Activated CD8-positive, alpha-beta T cell treated with anti-CD3 and anti-CD28 coated beads for 36 hours (primary cell): ENCODE measurements at regions of chr11 and their contacts with region 1.

Region 1: DNA sequence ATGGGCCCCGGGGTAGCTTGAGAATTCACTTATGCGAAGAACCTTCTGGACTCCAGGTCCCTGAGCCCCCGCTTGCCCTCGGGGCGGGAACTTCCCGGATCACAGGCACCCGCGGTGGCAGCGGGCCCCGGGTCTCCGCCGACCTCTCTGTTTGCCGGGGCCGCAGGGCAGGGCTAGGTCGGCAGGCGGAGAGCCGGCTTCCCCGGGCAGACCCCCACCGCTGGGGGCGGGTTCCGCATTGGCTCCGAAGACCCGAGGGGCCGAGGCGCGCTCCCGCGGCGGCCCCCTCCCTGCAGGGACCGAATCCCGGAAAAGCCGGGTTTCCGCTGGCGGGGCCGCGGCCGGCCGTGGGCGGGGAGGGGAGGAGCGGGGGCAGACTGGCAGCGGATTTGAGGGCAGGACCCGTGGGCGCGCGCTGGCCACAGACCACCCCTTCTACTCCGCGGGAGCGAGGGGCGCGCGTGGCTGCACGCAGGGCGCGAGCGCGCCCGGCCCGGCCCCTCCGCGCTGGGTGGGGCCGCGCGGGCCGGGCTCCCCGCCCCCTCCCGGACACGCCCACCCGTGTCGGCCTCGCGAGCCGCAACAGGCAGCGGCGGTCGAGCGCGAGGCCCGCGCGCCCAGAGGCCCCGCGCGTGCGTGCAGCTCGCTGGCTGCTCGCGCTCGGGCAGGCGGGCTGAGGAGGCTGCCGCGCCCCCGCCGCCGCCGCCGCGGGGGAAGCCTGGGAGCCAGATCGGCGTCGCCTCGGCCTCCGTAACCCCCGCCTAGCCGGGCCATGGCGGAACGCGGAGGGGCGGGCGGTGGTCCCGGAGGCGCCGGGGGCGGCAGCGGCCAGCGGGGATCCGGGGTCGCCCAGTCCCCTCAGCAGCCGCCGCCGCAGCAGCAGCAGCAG is at the start of gene PACS1:
- DNase-seq: peak; percentile 80
- ATAC-seq: peak; percentile 63
- H3K4me3 Mint-ChIP-seq: peak within 1 kb of the TSS; percentile 81
- H3K27ac Mint-ChIP-seq: peak within 1 kb of the TSS; percentile 95
- H3K4me1 Mint-ChIP-seq: peaks cover 63% of the 10 kb centered on the region
- H3K27me3 Mint-ChIP-seq: no peaks in the 10 kb centered on the region
- CTCF ChIP-seq: no peak
- total RNA-seq, gene PACS1: 76.3 to 78.3 TPM

Region 2: DNA sequence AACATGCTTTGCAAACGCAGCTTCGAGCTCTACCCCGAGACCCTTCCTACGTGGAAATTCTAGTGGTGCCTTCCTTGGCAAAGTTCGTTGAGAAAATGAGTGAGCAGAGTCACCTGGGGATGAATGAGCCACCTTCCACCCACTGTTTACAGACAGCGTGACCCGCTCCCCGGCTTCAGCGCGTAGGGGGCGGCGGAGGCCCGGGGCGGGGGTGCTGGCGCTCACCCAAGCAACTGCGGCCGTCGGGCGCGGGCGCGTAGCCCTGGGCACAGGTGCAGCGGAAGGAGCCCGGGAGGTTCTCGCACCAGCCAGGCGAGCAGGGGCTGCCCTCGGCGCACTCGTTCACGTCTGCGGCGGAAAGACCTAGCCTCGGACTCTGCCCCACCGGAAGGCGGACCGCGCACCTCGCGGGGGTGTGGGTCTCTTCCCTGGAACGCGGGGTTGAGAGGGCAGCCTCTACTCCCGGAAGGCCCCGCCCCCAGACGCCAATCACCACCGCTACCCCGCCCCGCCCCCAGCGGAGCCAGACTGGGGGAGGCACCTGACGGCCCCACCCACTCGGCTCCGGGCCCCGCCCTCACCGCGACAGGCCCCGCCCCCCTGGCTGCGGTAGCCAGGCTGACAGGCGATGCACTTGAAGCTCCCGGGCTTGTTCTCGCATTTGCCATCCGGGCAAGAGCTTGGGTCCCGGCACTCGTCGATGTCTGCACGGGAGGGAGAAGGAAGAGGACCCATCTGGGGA is 523.6 kb before region 1 on chr11:
- CTCF ChIA-PET with region 1: no interaction called
- POLR2A ChIA-PET with region 1: no interaction called
- intact Hi-C with region 1: no loop called
- DNase-seq: peak; percentile 98
- ATAC-seq: peak; percentile 90
- H3K4me3 Mint-ChIP-seq: peak overlapping the region; percentile 71
- H3K27ac Mint-ChIP-seq: peak overlapping the region; percentile 84
- H3K4me1 Mint-ChIP-seq: peaks cover 52% of the 10 kb centered on the region
- H3K27me3 Mint-ChIP-seq: no peaks in the 10 kb centered on the region
- CTCF ChIP-seq: no peak

Region 3: DNA sequence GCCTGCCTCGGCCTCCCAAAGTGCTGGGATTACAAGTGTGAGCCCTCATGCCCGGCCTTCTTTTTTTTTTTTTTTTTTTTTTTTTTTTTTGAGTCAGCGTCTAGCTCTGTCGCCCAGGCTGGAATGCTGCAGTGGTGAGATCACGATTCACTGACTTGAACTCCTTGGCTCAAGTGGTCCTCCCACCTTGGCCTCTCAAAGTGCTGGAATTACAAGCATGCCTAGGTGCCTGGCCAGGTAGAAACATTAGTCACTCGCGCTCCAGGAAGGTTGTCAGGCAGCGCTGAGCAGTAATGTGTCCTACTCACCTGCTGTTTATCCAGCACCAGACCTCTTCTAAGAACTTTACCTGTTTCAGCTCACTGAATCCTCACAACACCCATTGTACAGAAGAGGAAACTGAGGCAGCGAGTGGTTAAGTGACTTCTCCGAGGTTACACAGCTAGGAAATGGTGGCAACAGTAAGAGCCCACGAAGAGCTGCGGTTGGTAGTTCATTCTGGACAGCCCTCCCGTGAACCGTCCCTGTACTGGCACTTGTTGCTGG is 58.6 kb before region 1 on chr11:
- CTCF ChIA-PET with region 1: no interaction called
- POLR2A ChIA-PET with region 1: no interaction called
- intact Hi-C with region 1: no loop called
- DNase-seq: no peak
- ATAC-seq: no peak
- H3K4me3 Mint-ChIP-seq: no peak overlapping the region
- H3K27ac Mint-ChIP-seq: no peak overlapping the region
- H3K4me1 Mint-ChIP-seq: peaks cover 2% of the 10 kb centered on the region
- H3K27me3 Mint-ChIP-seq: peaks cover 17% of the 10 kb centered on the region
- CTCF ChIP-seq: no peak

Region 4: GRCh38 chr11:66045177-66045639 is 24.8 kb before region 1 on chr11:
- CTCF ChIA-PET with region 1: interaction called, 133 read pairs
- POLR2A ChIA-PET with region 1: interaction called, 3 read pairs
- intact Hi-C with region 1: no loop called
- DNase-seq: peak; percentile 88
- ATAC-seq: peak; percentile 93
- H3K4me3 Mint-ChIP-seq: peak overlapping the region; percentile 38
- H3K27ac Mint-ChIP-seq: peak overlapping the region; percentile 69
- H3K4me1 Mint-ChIP-seq: peaks cover 20% of the 10 kb centered on the region
- H3K27me3 Mint-ChIP-seq: peaks cover 7% of the 10 kb centered on the region
- CTCF ChIP-seq: peak; percentile 98

Region 5: DNA sequence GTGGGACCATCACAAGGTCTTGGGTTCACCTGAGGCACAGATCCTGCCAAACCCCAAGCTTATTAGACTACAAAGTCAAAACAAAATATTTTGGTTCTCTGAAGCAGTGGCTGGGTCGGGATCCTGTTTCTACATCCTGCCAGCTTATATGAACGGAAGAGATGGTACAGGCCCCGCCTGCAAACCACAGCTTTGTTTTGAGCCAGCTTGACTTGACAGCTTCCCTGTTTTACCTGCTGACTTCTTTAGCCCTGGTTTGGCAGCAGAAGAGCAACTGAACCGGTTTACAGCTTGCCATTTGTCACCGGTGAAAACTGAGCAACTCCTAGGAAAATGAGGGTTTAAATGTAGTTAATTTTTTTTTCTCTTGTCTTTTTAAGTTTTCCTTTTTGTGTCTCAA is 11.5 kb after region 1 on chr11:
- CTCF ChIA-PET with region 1: interaction called, 59 read pairs
- POLR2A ChIA-PET with region 1: interaction called, 25 read pairs
- intact Hi-C with region 1: no loop called
- DNase-seq: peak; percentile 89
- ATAC-seq: peak; percentile 83
- H3K4me3 Mint-ChIP-seq: peak overlapping the region; percentile 75
- H3K27ac Mint-ChIP-seq: peak overlapping the region; percentile 99
- H3K4me1 Mint-ChIP-seq: peaks cover 89% of the 10 kb centered on the region
- H3K27me3 Mint-ChIP-seq: no peaks in the 10 kb centered on the region
- CTCF ChIP-seq: no peak

Region 6: DNA sequence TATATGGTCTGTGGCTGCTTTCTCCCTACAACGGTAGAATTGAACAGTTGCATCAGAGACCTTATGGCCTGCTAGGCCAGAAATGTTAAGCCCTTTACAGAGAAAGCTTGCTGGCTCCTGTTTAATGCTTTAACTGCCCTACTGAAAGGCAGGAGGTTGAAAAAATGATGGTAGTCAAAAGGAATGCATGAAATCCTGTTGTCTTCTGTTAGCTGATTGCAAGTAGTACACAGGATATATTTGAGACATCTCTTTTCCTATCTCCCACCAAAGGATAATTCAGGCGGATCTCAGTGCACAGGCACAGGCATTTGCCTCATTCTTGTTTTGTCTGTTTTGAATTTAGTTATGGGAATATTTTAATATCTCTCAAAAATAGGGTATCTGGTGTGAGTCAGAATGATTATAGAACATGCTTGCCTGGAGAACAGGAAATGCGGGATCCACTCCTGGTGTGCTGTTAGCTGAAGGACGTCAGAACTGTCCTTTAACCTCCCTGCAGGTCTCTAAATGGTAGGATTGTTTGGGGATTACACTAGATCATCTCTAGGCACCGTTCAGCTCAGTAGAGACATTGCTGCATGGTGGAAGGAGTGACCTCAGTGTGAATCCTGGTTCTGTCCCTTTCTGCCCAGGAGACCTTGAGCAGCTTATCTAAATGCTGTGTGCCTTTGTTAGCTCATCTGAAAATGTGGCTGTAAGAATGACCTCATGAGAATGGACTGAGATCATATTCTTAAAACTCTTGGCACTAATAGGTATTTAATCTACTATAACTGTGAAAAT is 49.6 kb after region 1 on chr11:
- CTCF ChIA-PET with region 1: interaction called, 19 read pairs
- POLR2A ChIA-PET with region 1: interaction called, 8 read pairs
- intact Hi-C with region 1: no loop called
- DNase-seq: no peak
- ATAC-seq: no peak
- H3K4me3 Mint-ChIP-seq: no peak overlapping the region
- H3K27ac Mint-ChIP-seq: peak overlapping the region; percentile 69
- H3K4me1 Mint-ChIP-seq: peaks cover 83% of the 10 kb centered on the region
- H3K27me3 Mint-ChIP-seq: no peaks in the 10 kb centered on the region
- CTCF ChIP-seq: no peak

Region 7: GRCh38 chr11:66136752-66137123 is 66.8 kb after region 1 on chr11:
- CTCF ChIA-PET with region 1: interaction called, 112 read pairs
- POLR2A ChIA-PET with region 1: interaction called, 4 read pairs
- intact Hi-C with region 1: no loop called
- DNase-seq: peak; percentile 58
- ATAC-seq: no peak
- H3K4me3 Mint-ChIP-seq: no peak overlapping the region
- H3K27ac Mint-ChIP-seq: peak overlapping the region; percentile 62
- H3K4me1 Mint-ChIP-seq: peaks cover 62% of the 10 kb centered on the region
- H3K27me3 Mint-ChIP-seq: no peaks in the 10 kb centered on the region
- CTCF ChIP-seq: no peak

Region 8: GRCh38 chr11:66207876-66208275 is 137.9 kb after region 1 on chr11:
- CTCF ChIA-PET with region 1: no interaction called
- POLR2A ChIA-PET with region 1: no interaction called
- intact Hi-C with region 1: no loop called
- DNase-seq: no peak
- ATAC-seq: no peak
- H3K4me3 Mint-ChIP-seq: no peak overlapping the region
- H3K27ac Mint-ChIP-seq: no peak overlapping the region
- H3K4me1 Mint-ChIP-seq: peaks cover 2% of the 10 kb centered on the region
- H3K27me3 Mint-ChIP-seq: no peaks in the 10 kb centered on the region
- CTCF ChIP-seq: no peak

Region 9: DNA sequence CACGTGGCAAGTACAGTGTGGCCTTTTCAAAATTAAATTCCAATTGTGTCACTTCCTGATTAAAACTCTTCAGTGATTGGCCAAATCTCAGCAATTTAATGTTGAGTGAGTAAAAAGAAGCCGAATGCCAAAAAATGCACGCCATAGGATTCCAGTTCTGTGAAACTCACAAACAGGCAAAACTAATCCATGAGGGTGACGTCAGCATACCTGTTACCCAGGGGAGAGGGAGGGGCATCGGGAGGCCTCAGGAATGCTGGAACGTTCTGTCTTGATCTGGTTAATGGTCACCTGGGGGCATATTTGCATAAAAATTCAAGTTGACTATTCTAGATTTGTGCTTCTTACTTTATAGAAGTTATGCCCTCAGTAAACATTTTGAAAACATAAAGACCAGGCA is 158.6 kb after region 1 on chr11:
- CTCF ChIA-PET with region 1: no interaction called
- POLR2A ChIA-PET with region 1: no interaction called
- intact Hi-C with region 1: no loop called
- DNase-seq: no peak
- ATAC-seq: no peak
- H3K4me3 Mint-ChIP-seq: no peak overlapping the region
- H3K27ac Mint-ChIP-seq: peak overlapping the region; percentile 38
- H3K4me1 Mint-ChIP-seq: peaks cover 5% of the 10 kb centered on the region
- H3K27me3 Mint-ChIP-seq: no peaks in the 10 kb centered on the region
- CTCF ChIP-seq: no peak